ENCODE measurements at regions of chr7 and their contacts with region 1.

Region 1: DNA sequence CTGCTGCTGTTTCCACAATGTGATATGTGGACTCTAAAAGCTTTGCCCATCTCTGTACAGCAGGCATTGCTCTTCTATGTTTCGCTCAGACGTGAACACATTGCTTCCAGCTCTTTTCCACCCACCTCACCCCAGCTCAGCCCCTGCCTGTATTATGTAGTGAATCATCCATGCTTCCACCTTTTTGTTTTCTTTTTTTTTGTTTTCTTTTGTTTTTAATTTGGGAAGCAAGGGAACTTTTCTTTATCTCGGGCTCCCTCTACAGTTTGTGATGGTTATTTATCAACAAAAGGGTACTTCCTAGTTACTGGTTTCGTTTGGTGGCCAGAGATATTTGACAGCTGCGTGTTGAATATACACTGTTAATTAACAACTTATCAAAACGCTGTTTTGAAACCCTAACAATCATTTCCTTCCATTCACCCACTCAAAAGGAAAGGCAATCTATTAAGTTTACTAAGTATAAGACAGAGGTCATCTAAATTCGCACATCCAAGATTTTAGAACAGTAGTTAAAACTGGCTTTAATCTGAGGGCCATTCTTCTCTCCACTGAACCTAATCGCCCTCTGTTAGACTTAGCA is 127.9 kb upstream of the STK17A start:
- DNase-seq: peak; percentile 10
- H3K4me3 ChIP-seq: peak overlapping the region; percentile 3; the same call in 1 of the 2 replicates
- H3K27me3 ChIP-seq: no peaks in the 10 kb centered on the region
- CTCF ChIP-seq: peak; percentile 54

Region 2: DNA sequence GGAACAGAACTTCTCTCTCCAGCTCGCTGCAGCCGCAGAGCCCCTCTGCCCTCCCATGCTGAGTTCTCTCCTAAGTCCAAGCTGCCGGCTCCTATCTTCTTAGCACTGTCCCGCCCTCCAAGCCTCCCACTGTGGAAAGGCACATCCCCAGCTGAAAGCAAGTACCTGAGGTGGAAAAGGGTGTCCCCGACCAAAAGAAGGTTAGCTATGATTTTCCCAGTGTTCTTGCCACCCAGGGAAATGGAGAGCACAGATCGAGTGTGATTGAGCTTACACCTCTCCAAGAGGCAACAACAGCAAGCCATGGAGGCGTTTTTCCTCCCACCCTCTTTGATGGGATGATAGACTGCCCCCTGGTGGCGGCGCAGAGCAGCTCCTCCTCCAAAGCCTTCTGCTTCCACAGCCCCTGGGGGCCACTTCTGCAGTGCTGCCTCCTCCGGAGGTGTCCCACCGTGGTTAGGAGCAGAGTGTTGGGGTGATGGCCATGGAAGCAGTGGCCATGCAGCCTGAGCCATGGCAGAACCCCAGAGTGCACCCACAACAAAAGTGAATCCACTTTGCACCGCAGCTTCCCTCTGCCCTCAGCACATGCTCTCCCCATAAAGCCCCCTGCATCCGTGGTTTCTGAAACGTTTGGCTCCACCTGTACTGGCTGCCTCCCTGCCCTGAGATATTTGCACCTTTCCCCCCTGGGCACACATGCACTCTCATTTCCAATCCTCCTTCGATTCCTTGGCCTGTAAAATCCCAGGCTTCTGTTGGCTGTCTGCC is 15.2 kb before region 1 on chr7:
- CTCF ChIA-PET with region 1: interaction called, 22 read pairs
- POLR2A ChIA-PET with region 1: no interaction called
- DNase-seq: no peak
- H3K4me3 ChIP-seq: no peak overlapping the region
- H3K27me3 ChIP-seq: no peaks in the 10 kb centered on the region
- CTCF ChIP-seq: peak; percentile 81

Region 3: GRCh38 chr7:43465581-43466554 is 10.8 kb after region 1 on chr7:
- CTCF ChIA-PET with region 1: interaction called, 12 read pairs
- POLR2A ChIA-PET with region 1: no interaction called
- DNase-seq: no peak
- H3K4me3 ChIP-seq: no peak overlapping the region
- H3K27me3 ChIP-seq: peaks cover 3% of the 10 kb centered on the region; the same call in 1 of the 2 replicates
- CTCF ChIP-seq: no peak